ENCODE measurements at regions of chr9 and their contacts with region 1.

Region 1: DNA sequence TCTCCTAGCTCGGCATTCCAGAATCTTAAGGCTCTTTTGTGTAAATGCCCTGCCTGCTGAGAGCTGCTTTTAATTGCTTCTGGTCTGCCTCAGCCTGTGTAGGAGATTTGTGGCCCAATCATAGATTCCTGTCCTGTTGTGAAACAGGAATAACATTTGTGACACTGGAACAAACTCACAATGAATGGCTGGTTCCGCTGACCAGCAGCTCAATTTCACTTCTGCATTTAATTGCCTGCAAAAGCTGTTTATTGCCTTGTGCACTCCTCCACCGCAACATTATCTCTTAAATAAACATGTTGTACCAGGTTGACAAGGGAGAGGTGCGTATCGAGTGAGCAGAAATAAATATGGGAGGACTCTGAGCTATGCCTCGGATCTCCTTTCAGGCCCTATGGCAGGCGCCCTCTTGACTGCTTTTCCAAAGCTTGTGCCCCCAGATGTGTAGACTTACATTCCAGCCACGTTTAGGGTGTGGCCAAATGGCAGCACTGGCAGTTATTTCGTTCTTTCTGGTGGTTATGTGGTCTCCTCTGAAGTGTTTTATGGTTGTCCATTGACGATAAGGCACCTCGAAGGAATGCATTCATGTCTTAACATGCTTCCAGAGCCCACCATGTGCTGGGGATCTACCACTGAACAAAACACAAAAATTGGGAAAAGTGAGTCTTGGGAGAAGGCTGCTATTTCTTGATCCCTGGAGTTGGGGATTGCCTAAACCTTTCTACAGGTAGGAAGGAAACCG is 58.1 kb downstream of the DMRT1 start:
- DNase-seq: no peak
- ATAC-seq: peak in 2 of 8 donors; percentile 35 to 37
- H3K4me3 ChIP-seq: no peak overlapping the region
- H3K27ac ChIP-seq: no peak overlapping the region
- H3K4me1 ChIP-seq: peaks cover 0 to 8% (median 0%) of the 10 kb centered on the region in 9 donors
- H3K27me3 ChIP-seq: peaks cover 0 to 67% (median 40%) of the 10 kb centered on the region in 7 donors
- CTCF ChIP-seq: no peak

Region 2: DNA sequence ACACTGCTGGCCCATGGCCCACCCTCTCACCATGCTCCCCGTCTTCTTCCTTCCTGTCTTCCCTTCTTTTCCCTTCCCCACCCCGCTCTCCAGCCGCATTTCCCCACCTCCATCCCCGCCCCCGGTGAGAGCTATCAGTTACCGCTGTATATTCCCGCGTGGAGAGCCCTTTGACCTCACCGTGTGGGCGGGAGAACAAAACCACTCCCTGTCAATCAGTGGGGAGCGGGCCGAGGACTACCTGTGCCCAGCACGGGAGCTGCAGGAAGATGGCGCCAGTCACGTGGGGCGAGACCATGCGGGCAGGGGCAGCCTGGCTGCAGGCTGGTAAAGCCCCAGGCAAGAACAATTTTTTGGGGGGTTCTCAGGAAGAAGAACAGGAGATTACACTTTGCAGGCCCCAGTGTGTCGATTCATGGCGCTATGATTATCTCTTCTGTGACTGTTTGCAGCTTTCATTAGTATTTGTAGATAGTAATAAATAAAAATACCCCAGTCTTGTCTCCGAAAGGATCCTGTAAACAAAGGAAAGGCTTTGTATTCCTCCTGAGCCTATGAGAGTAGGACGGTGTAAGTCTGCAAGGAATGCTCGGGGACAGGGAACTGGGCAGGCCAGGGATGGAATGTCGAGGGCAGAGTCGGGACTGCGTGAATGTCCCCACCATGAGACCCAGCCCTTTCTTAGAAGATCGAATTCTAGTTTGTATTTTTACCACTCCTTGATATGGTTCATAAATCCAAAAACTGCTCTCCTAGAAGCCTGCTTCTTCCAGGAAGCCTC is 72.9 kb before region 1 on chr9:
- intact Hi-C with region 1: no loop called
- DNase-seq: no peak
- ATAC-seq: no peak
- H3K4me3 ChIP-seq: no peak overlapping the region
- H3K27ac ChIP-seq: no peak overlapping the region
- H3K4me1 ChIP-seq: no peaks in the 10 kb centered on the region
- H3K27me3 ChIP-seq: peaks cover 0 to 3% (median 0%) of the 10 kb centered on the region in 7 donors
- CTCF ChIP-seq: no peak

Region 3: GRCh38 chr9:1875921-1876448 is 976.4 kb after region 1 on chr9:
- intact Hi-C with region 1: loop called in 1 of 10 experiments (anchors 5 kb)
- DNase-seq: no peak
- ATAC-seq: no peak
- H3K4me3 ChIP-seq: no peak overlapping the region
- H3K27ac ChIP-seq: no peak overlapping the region
- H3K4me1 ChIP-seq: no peaks in the 10 kb centered on the region
- H3K27me3 ChIP-seq: peaks cover 0 to 14% (median 0%) of the 10 kb centered on the region in 7 donors
- CTCF ChIP-seq: no peak